ENCODE measurements at regions of chrX and their contacts with region 1.

Region 1: GRCh38 chrX:12894074-12895030 is 12.1 kb upstream of the TLR8 start:
- DNase-seq: peak; percentile 25 to 57 (median 32)
- ATAC-seq: peak; percentile 80
- H3K4me3 ChIP-seq: no peak overlapping the region
- H3K27ac ChIP-seq: no peak overlapping the region
- H3K4me1 ChIP-seq: no peaks in the 10 kb centered on the region
- H3K27me3 ChIP-seq: peaks cover 0 to 9% of the 10 kb centered on the region in 2 experiments; a peak in 1 of 5 replicates
- CTCF ChIP-seq: peak; percentile 61 to 74 (median 63)
- EP300 ChIP-seq: no peak
- POLR2A ChIP-seq: no peak
- RAD21 ChIP-seq: peak; percentile 29 to 57; a peak in 3 of 4 replicates

Region 2: GRCh38 chrX:12814420-12814819 is 79.9 kb before region 1 on chrX:
- CTCF ChIA-PET with region 1: interaction called, 11 read pairs
- POLR2A ChIA-PET with region 1: no interaction called
- in situ Hi-C with region 1: no loop called
- intact Hi-C with region 1: loop called (anchors 1 kb)
- DNase-seq: peak; percentile 13 to 47 (median 27)
- ATAC-seq: peak; percentile 84
- H3K4me3 ChIP-seq: no peak overlapping the region
- H3K27ac ChIP-seq: no peak overlapping the region
- H3K4me1 ChIP-seq: no peaks in the 10 kb centered on the region
- H3K27me3 ChIP-seq: no peaks in the 10 kb centered on the region
- CTCF ChIP-seq: peak; percentile 39 to 56 (median 50); a peak in 5 of 6 replicates
- EP300 ChIP-seq: no peak
- POLR2A ChIP-seq: no peak
- RAD21 ChIP-seq: peak; percentile 59 to 62

Region 3: DNA sequence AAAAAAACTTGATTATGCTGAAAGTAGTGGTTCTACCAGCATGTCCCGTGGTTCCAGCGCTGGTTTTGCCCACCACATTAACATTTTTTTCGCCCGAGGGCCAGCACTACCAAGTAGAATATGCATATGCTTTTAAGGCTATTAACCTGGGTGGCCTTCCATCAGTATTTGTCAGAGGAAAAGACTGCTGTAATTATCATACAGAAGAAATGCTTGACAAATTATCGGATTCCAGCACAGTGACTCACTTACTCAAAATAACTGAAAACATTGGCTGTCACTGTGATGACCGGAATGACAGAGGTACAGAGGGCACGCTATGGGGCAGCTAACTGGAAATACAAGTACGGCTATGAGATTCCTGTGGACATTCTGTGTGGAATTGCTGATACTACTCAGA is 68.6 kb before region 1 on chrX:
- CTCF ChIA-PET with region 1: no interaction called
- POLR2A ChIA-PET with region 1: no interaction called
- in situ Hi-C with region 1: loop called (anchors 10 kb)
- intact Hi-C with region 1: loop called (anchors 5 kb)
- DNase-seq: no peak
- ATAC-seq: no peak
- H3K4me3 ChIP-seq: no peak overlapping the region
- H3K27ac ChIP-seq: no peak overlapping the region
- H3K4me1 ChIP-seq: no peaks in the 10 kb centered on the region
- H3K27me3 ChIP-seq: peaks cover 5 to 6% of the 10 kb centered on the region in 2 experiments; a peak in 3 of 5 replicates
- CTCF ChIP-seq: no peak
- EP300 ChIP-seq: no peak
- POLR2A ChIP-seq: no peak
- RAD21 ChIP-seq: no peak